Activated naive CD4-positive, alpha-beta T cell treated with anti-CD3 and anti-CD28 coated beads, Interleukin-2, amount 10 ng/mL, durations not matched to agents 7 days and 5 days (primary cell): ENCODE measurements at regions of chr3 and their contacts with region 1.

Region 1: GRCh38 chr3:186540221-186540834 is 3.9 kb downstream of the CRYGS start:
- DNase-seq: peak; percentile 89
- H3K4me3 Mint-ChIP-seq: no peak overlapping the region
- H3K27ac Mint-ChIP-seq: no peak overlapping the region
- H3K4me1 Mint-ChIP-seq: peaks cover 9% of the 10 kb centered on the region
- H3K27me3 Mint-ChIP-seq: peaks cover 4% of the 10 kb centered on the region

Region 2: GRCh38 chr3:185942907-185943759 is 597.2 kb before region 1 on chr3:
- CTCF ChIA-PET with region 1: interaction called, 24 read pairs
- DNase-seq: peak; percentile 92
- H3K4me3 Mint-ChIP-seq: peak overlapping the region; percentile 6
- H3K27ac Mint-ChIP-seq: peak overlapping the region; percentile 38
- H3K4me1 Mint-ChIP-seq: peaks cover 23% of the 10 kb centered on the region
- H3K27me3 Mint-ChIP-seq: peaks cover 18% of the 10 kb centered on the region

Region 3: DNA sequence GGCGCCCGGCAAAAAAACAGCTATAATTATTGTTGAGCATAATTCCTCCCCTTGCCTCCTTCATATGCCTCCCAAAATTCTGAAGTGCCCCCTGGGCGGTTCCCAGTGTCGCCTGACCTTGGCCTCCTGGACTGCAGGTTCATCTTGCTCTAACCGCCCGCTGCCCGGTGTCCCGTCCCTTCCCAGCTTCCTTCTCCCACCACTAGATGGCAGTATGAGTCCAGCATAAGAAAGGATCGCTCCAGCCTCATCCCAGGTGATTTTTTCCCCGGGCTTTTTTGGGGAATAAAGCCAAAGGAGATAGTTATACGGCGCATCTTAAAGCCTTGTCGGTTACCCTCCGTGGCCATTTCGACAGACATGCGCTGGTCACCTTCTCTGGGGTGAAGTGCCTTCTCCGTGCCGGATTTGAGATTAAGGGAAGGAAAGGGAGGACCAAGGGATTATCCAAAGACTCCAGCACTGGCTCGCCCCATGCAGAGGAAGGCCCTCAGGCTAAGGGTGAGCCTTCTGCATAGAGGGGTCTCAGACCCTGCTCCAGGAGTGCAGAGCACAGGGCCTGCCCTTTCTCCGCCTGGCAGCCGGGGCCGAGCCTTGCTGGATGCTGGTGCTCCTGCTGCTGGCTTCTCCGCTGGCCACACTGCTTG is 556.7 kb before region 1 on chr3:
- CTCF ChIA-PET with region 1: interaction called, 27 read pairs
- DNase-seq: peak; percentile 65
- H3K4me3 Mint-ChIP-seq: no peak overlapping the region
- H3K27ac Mint-ChIP-seq: no peak overlapping the region
- H3K4me1 Mint-ChIP-seq: no peaks in the 10 kb centered on the region
- H3K27me3 Mint-ChIP-seq: peaks cover 29% of the 10 kb centered on the region

Region 4: GRCh38 chr3:186259612-186260383 is 280.5 kb before region 1 on chr3:
- CTCF ChIA-PET with region 1: interaction called, 107 read pairs
- DNase-seq: peak; percentile 73
- H3K4me3 Mint-ChIP-seq: no peak overlapping the region
- H3K27ac Mint-ChIP-seq: no peak overlapping the region
- H3K4me1 Mint-ChIP-seq: peaks cover 13% of the 10 kb centered on the region
- H3K27me3 Mint-ChIP-seq: peaks cover 12% of the 10 kb centered on the region

Region 5: GRCh38 chr3:186471771-186472170 is 68.6 kb before region 1 on chr3:
- CTCF ChIA-PET with region 1: interaction called, 15 read pairs
- DNase-seq: no peak
- H3K4me3 Mint-ChIP-seq: no peak overlapping the region
- H3K27ac Mint-ChIP-seq: no peak overlapping the region
- H3K4me1 Mint-ChIP-seq: no peaks in the 10 kb centered on the region
- H3K27me3 Mint-ChIP-seq: peaks cover 10% of the 10 kb centered on the region

Region 6: GRCh38 chr3:186526256-186526606 is 14.1 kb before region 1 on chr3:
- CTCF ChIA-PET with region 1: interaction called, 11 read pairs
- DNase-seq: no peak
- H3K4me3 Mint-ChIP-seq: no peak overlapping the region
- H3K27ac Mint-ChIP-seq: no peak overlapping the region
- H3K4me1 Mint-ChIP-seq: peaks cover 17% of the 10 kb centered on the region
- H3K27me3 Mint-ChIP-seq: peaks cover 11% of the 10 kb centered on the region

Region 7: DNA sequence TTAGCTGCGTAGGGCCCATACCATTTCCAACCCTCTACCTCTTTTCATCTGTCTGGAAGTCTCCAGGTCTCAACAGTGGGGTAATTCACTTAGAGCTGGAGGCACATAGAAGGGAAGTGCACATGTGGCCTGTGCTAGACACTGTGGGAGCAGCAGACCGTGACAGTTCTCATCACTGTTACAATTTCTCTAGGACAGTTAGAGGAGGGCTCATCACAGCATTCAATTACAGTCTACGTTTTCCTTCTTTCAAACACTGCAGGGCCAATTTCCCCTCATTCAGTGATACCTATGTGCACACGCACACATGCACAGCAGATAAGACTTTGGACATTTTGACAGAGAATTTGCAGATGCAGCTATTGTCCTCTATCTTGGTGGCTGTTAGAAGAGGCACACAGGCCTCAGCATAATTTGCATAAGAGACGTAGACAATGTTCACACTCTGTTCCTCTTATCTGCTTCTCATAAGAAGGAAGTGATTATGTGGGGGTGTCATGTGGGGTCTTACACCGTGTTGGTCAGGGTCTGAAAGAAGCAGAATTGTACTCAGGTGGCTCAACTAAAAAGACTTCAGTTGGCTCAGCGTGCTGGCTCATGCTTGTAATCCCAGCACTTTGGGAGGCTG is 112.9 kb after region 1 on chr3:
- CTCF ChIA-PET with region 1: no interaction called
- DNase-seq: no peak
- H3K4me3 Mint-ChIP-seq: no peak overlapping the region
- H3K27ac Mint-ChIP-seq: no peak overlapping the region
- H3K4me1 Mint-ChIP-seq: no peaks in the 10 kb centered on the region
- H3K27me3 Mint-ChIP-seq: peaks cover 35% of the 10 kb centered on the region